Sciatic nerve (tissue), 2 donors: ENCODE measurements at regions of chr2 and their contacts with region 1.

Region 1: DNA sequence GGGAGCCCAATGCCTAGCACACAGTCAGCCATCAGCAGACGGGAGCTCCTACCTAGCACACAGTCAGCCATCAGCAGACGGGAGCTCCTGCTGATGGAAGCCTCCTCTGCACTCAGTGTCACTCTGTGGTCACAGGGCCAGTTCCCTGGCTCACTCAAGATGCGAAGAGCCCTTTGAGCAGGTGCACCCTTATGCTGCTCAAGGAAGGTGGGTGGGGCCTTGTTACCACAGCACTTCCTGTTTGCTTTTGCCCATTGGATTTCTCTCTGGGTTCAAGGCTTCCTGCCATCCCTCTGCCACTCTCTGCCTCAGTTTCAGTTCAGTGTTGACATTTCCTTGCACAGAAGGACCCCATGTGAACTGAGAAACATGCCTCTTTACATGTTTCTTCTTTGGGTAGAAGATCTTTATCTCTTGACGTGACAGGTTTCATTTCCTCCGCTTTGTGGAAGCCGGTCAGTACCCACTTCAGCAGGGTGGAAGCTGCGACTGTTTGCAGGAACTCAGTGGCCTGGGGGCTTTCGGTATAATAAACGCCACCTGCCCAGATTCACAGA is 11.6 kb downstream of the TRIB2 start:
- DNase-seq: no peak
- ATAC-seq: no peak

Region 2: DNA sequence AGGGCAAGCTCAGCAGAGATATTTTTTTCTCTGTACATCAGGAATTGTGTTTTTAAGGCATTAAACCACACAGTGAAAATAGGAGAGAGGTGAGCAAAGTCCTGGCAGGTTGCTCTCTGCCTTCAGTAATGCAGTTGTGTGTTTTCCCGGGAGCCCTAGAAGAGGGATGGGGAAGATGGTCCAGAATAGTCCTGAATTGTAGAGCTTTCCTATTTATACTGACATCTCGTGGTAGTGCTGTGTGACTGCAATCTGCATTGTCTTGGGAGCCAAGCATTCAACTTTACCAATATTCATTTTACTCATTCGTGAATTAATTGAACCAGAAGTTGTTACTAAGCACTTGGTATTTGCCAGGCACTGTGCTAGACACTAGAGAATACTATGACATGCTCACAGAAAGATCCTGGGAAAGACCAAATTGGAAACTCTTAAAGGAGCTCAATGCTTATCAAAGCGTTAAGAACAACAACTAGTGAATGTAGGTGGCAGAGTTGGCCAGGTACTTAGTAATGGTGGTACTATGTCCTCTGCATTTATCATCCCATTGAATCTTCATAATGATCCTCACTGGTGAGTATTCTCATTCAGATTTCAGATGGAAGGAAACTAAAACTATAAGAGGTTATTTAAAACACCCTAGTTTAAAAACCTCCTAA is 203.0 kb after region 1 on chr2:
- intact Hi-C with region 1: loop called (anchors 10 kb)
- DNase-seq: no peak
- ATAC-seq: peak; percentile 78